Aorta (tissue), 5 donors: ENCODE measurements at regions of chr3 and their contacts with region 1.

Region 1: GRCh38 chr3:52536369-52537164 is at the start of gene UQCC5:
- DNase-seq: peak; percentile 99
- ATAC-seq: peak; percentile 97
- H3K4me3 ChIP-seq: peak within 1 kb of the TSS; percentile 38 to 44
- H3K27ac ChIP-seq: peak within 1 kb of the TSS; percentile 23 to 68
- H3K4me1 ChIP-seq: peaks cover 0 to 7% of the 10 kb centered on the region in 2 donors
- H3K27me3 ChIP-seq: no peaks in the 10 kb centered on the region
- total RNA-seq, gene UQCC5: 9.1 to 14.0 TPM

Region 2: GRCh38 chr3:52455283-52456168 is 81.0 kb before region 1 on chr3 and contains the start of gene NISCH:
- intact Hi-C with region 1: loop called in 1 of 2 experiments (anchors 5 kb)
- DNase-seq: peak; percentile 93 to 97
- ATAC-seq: peak; percentile 93
- H3K4me3 ChIP-seq: peak within 1 kb of the TSS; percentile 67 to 86
- H3K27ac ChIP-seq: peak within 1 kb of the TSS; percentile 14 to 87
- H3K4me1 ChIP-seq: no peaks in the 10 kb centered on the region
- H3K27me3 ChIP-seq: no peaks in the 10 kb centered on the region
- total RNA-seq, gene NISCH: 80.9 to 157 TPM

Region 3: GRCh38 chr3:52471371-52472238 is 65.0 kb before region 1 on chr3:
- intact Hi-C with region 1: loop called in 1 of 2 experiments (anchors 5 kb)
- DNase-seq: peak; percentile 83 to 90
- ATAC-seq: peak; percentile 65
- H3K4me3 ChIP-seq: no peak overlapping the region
- H3K27ac ChIP-seq: no peak overlapping the region
- H3K4me1 ChIP-seq: no peaks in the 10 kb centered on the region
- H3K27me3 ChIP-seq: no peaks in the 10 kb centered on the region

Region 4: DNA sequence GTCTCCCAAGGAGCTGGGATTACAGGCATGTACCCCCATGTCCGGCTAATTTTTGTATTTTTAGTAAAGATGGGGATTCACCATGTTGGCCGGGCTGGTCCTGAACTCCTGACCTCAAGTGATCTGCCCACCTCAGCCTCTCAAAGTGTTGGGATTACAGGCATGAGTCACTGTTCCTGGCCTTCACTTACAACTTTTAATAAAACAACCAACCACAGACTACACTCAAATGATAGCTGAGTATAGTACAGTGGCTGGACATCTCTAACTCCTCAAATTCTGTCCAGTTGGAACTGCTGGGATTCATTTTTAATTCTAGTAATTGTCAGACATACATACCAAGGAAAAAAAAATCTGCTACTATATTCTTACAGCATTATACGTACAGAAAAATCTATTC is 78.1 kb after region 1 on chr3:
- intact Hi-C with region 1: no loop called
- DNase-seq: no peak
- ATAC-seq: no peak
- H3K4me3 ChIP-seq: no peak overlapping the region
- H3K27ac ChIP-seq: no peak overlapping the region
- H3K4me1 ChIP-seq: no peaks in the 10 kb centered on the region
- H3K27me3 ChIP-seq: no peaks in the 10 kb centered on the region